AG04449 (cell line): ENCODE measurements at regions of chr12 and their contacts with region 1.

Region 1: GRCh38 chr12:56510786-56511185 is 10.8 kb upstream of the RBMS2 start:
- DNase-seq: no peak
- H3K4me3 ChIP-seq: no peak overlapping the region
- CTCF ChIP-seq: no peak

Region 2: GRCh38 chr12:56630160-56630632 is 119.4 kb after region 1 on chr12 and contains the start of gene BAZ2A:
- CTCF ChIA-PET with region 1: interaction called, 94 read pairs
- POLR2A ChIA-PET with region 1: no interaction called
- DNase-seq: no peak
- H3K4me3 ChIP-seq: peak within 1 kb of the TSS; percentile 91
- CTCF ChIP-seq: no peak

Region 3: DNA sequence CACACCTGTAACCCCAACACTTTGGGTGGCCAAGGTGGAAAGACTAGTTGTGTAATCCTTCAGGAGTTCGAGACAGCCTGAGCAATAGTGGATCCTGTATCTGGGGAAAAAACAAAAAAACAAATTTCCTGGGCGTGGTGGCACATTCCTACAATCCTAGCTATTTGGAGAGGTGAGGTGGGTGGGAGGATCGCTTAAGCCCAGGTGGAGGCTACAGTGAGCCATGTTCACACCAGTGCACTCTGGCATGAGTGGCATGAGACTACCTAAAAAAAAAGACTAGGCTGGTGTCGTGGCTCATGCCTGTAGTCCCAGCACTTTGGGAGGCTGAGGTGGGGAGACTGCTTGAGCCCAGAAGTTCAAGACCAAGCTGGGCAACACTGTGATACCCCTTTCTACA is 160.1 kb after region 1 on chr12:
- CTCF ChIA-PET with region 1: no interaction called
- POLR2A ChIA-PET with region 1: no interaction called
- DNase-seq: no peak
- H3K4me3 ChIP-seq: no peak overlapping the region
- CTCF ChIP-seq: no peak